Common myeloid progenitor, CD34-positive (primary cell): ENCODE measurements at regions of chr6 and their contacts with region 1.

Region 1: DNA sequence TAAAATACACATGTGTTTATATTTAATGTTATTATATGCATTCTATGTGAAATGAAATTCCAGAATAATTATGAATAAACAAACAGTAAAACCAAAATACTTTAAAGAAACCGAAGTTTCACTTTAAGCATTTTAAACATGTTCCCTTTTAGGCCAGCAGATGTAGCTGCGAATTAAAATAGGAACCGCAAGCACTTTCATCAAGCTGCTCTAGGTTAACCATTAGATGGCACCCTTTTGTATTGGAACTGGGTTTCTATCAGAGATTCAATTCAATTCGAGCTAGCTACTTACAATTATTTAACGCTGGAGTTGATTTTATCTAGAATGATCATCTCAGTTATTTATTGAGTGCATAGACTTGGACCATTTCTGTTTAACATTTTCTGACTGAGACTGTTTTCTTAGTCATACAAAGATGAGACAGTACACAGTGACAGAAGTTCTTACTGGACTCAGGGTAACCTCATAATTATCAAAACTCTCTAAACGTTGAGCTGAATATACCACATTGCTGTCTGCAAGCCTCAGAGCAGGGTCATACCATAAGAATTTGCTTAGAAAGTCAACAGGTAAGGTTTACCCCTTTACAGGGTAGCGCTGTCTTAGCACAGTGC is 8.5 kb downstream of the TMEM242 start:
- DNase-seq: peak; percentile 82 to 89 (median 88)
- H3K4me3 ChIP-seq: no peak overlapping the region
- H3K27ac ChIP-seq: no peak overlapping the region
- H3K4me1 ChIP-seq: peaks cover 0 to 20% (median 8%) of the 10 kb centered on the region in 4 experiments
- H3K27me3 ChIP-seq: no peaks in the 10 kb centered on the region

Region 2: GRCh38 chr6:157332813-157333212 is 18.0 kb after region 1 on chr6:
- CTCF ChIA-PET with region 1: interaction called, 14 read pairs
- POLR2A ChIA-PET with region 1: no interaction called
- DNase-seq: no peak
- H3K4me3 ChIP-seq: no peak overlapping the region
- H3K27ac ChIP-seq: no peak overlapping the region
- H3K4me1 ChIP-seq: peaks cover 0 to 6% (median 5%) of the 10 kb centered on the region in 4 experiments
- H3K27me3 ChIP-seq: peaks cover 0 to 2% (median 0%) of the 10 kb centered on the region in 5 experiments

Region 3: GRCh38 chr6:157339432-157339831 is 24.6 kb after region 1 on chr6:
- CTCF ChIA-PET with region 1: interaction called, 14 read pairs
- POLR2A ChIA-PET with region 1: no interaction called
- DNase-seq: peak in 2 of 3 donors; percentile 4 to 6
- H3K4me3 ChIP-seq: no peak overlapping the region
- H3K27ac ChIP-seq: no peak overlapping the region
- H3K4me1 ChIP-seq: peaks cover 0 to 10% (median 5%) of the 10 kb centered on the region in 4 experiments
- H3K27me3 ChIP-seq: no peaks in the 10 kb centered on the region

Region 4: DNA sequence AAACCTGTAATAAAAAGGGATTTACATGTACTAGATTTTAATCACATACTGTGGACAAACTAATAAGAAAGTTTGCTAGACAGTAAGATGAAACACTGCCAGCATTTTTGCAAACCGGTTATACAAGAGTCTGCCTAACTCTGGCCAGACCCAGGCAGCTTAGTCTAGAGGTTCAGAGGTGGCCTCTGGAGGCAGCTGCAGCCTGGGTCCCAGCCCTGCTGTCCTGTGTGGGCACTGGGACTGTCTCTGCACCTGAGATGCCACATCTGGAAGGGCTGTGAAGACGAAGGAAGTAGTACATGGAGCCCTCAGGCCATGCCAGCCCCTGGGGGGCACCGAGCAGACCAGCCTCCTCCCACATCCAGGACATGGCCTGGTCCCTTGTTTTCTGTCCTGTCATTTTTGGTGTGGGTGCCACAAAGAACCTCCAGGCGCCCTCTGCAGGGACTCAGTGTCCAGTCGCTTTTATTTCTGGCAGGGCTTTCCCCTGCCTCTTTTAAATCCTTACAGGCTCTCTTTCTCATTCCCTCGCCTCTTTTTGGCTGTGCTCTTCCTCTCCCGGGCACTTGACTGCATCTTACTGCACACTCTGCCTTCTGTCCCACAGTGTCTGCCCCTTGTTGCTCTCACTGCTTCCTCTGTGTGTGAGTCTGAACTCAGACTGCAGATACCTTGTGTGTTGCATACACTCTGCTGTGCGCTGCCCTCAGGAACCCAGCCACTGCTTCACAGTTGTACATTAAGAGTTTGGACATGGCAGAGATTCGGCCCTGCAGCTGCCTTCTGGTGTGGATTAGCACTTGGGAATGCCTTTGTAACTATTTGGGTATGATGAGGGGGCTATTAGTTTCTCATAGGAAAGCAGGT is 282.9 kb after region 1 on chr6:
- CTCF ChIA-PET with region 1: interaction called, 18 read pairs
- POLR2A ChIA-PET with region 1: no interaction called
- DNase-seq: peak; percentile 38 to 58 (median 51)
- H3K4me3 ChIP-seq: no peak overlapping the region
- H3K27ac ChIP-seq: no peak overlapping the region
- H3K4me1 ChIP-seq: no peaks in the 10 kb centered on the region
- H3K27me3 ChIP-seq: no peaks in the 10 kb centered on the region

Region 5: DNA sequence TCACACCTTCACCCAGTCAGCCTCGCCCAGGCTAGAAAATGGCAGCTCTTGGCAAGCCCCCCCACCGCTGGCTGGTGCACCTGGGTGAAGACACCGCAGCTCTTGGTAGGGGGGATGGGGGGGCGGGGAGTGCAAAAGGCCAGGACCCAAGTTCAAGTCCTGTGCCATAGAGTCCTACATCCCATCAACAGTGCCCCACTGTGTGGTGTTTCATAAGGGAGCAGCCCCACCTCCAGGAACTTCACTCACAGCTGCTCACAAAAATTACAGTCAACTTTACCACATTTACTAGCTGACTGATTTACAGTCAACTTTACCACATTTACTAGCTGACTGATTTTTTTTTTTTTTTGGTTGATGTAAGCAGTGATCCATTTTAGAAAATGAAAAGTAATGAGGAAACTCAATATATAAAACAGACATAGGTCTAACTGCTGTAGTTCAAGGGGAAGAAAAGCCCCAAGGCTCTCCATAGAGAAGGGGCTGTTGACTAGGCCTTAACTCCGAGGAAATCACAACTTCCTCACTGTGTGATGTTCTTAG is 299.3 kb after region 1 on chr6:
- CTCF ChIA-PET with region 1: interaction called, 22 read pairs
- POLR2A ChIA-PET with region 1: interaction called, 3 read pairs
- DNase-seq: peak; percentile 65 to 91 (median 84)
- H3K4me3 ChIP-seq: no peak overlapping the region
- H3K27ac ChIP-seq: no peak overlapping the region
- H3K4me1 ChIP-seq: peaks cover 7 to 27% (median 18%) of the 10 kb centered on the region in 4 experiments
- H3K27me3 ChIP-seq: no peaks in the 10 kb centered on the region

Region 6: GRCh38 chr6:157667211-157668008 is 352.6 kb after region 1 on chr6:
- CTCF ChIA-PET with region 1: interaction called, 14 read pairs
- POLR2A ChIA-PET with region 1: no interaction called
- DNase-seq: peak; percentile 83 to 89 (median 84)
- H3K4me3 ChIP-seq: peak overlapping the region in 4 of 7 experiments; percentile 6 to 58 (median 26)
- H3K27ac ChIP-seq: peak overlapping the region; percentile 71 to 85
- H3K4me1 ChIP-seq: peaks cover 0 to 39% (median 30%) of the 10 kb centered on the region in 4 experiments
- H3K27me3 ChIP-seq: no peaks in the 10 kb centered on the region